GM12878 (cell line): ENCODE measurements at regions of chrX and their contacts with region 1.

Region 1: DNA sequence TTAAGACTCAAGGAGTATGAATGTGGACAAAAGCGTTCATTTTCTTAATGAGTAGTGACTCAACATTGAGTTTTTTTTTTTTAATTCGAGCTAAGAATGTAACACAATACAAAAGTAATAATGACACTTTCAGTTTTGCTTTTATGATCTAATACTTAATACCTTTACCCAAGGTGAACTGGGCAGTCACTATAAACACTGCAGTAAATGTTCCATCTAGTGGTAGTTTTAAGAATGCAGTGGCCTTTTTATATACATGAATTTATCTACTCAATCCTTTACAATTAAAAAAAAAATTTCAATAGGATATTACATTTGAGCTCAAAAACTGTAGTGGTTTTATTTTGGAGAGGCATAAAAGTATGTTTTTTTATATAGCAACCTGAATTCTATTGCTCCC is 33.9 kb downstream of the PDK3 start:
- DNase-seq: no peak
- ATAC-seq: peak; percentile 88
- H3K4me3 ChIP-seq: no peak overlapping the region
- H3K27ac ChIP-seq: no peak overlapping the region
- H3K4me1 ChIP-seq: peaks cover 3% of the 10 kb centered on the region; the same call in 1 of the 2 replicates
- H3K27me3 ChIP-seq: no peaks in the 10 kb centered on the region
- CTCF ChIP-seq: peak; percentile 42 to 55 (median 49); a peak in 5 of 6 replicates
- EP300 ChIP-seq: no peak
- POLR2A ChIP-seq: no peak
- RAD21 ChIP-seq: peak; percentile 60

Region 2: GRCh38 chrX:24259544-24260240 is 239.3 kb before region 1 on chrX:
- CTCF ChIA-PET with region 1: interaction called, 25 read pairs
- POLR2A ChIA-PET with region 1: no interaction called
- RAD21 ChIA-PET with region 1: no interaction called
- SMC1A ChIA-PET with region 1: interaction called, 5 read pairs
- in situ Hi-C with region 1: no loop called
- intact Hi-C with region 1: loop called (anchors 2 kb)
- DNase-seq: no peak
- ATAC-seq: peak; percentile 86
- H3K4me3 ChIP-seq: no peak overlapping the region
- H3K27ac ChIP-seq: no peak overlapping the region
- H3K4me1 ChIP-seq: no peaks in the 10 kb centered on the region; the same call in 1 of the 2 replicates
- H3K27me3 ChIP-seq: no peaks in the 10 kb centered on the region; a peak in 1 of 4 replicates
- CTCF ChIP-seq: peak; percentile 57 to 66 (median 65); a peak in 5 of 6 replicates
- EP300 ChIP-seq: no peak
- POLR2A ChIP-seq: no peak
- RAD21 ChIP-seq: peak; percentile 74

Region 3: GRCh38 chrX:24387724-24388123 is 111.3 kb before region 1 on chrX:
- CTCF ChIA-PET with region 1: interaction called, 15 read pairs
- POLR2A ChIA-PET with region 1: no interaction called
- RAD21 ChIA-PET with region 1: no interaction called
- SMC1A ChIA-PET with region 1: interaction called, 92 read pairs
- in situ Hi-C with region 1: loop called (anchors 5 kb)
- intact Hi-C with region 1: no loop called
- DNase-seq: no peak
- ATAC-seq: no peak
- H3K4me3 ChIP-seq: no peak overlapping the region
- H3K27ac ChIP-seq: no peak overlapping the region
- H3K4me1 ChIP-seq: no peaks in the 10 kb centered on the region
- H3K27me3 ChIP-seq: no peaks in the 10 kb centered on the region; a peak in 1 of 4 replicates
- CTCF ChIP-seq: no peak
- EP300 ChIP-seq: no peak
- POLR2A ChIP-seq: no peak
- RAD21 ChIP-seq: no peak

Region 4: DNA sequence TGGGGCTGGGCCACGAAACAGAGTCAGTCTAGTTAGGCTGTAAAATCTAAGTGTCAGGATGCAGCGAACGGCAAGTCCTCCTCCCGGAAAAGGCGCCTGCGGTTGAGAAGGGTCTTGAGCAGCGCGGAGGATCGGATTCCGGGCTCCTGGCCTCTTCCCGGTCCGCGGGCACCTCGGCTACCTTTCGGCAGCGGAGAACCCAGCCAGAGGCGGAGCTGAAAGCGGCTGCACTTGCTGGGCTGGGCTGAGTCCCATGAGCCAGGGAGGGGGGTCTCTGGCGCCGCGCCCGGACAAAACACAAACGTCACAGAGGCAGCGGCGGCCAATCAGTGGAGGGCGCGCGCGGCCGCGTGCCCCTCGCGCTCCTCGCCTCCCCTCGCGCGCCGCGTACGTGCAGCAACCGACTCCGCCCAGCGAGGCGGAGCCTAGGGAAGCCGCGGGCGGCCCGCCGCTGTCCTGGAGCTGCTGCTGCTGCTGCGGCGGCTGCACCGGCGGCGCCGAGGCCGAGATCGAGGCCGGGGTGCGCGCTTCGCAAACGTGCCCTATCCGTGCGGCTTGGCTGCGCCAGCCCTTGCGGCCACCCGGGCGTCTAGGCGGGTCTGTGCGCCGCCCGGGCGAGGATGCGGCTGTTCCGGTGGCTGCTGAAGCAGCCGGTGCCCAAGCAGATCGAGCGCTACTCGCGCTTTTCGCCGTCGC is 34.0 kb before region 1 on chrX and contains the start of gene PDK3:
- CTCF ChIA-PET with region 1: interaction called, 7 read pairs
- POLR2A ChIA-PET with region 1: interaction called, 4 read pairs
- RAD21 ChIA-PET with region 1: interaction called, 12 read pairs
- SMC1A ChIA-PET with region 1: interaction called, 7 read pairs
- in situ Hi-C with region 1: no loop called
- intact Hi-C with region 1: no loop called
- DNase-seq: peak; percentile 45
- ATAC-seq: peak; percentile 95
- H3K4me3 ChIP-seq: peak within 1 kb of the TSS; percentile 78
- H3K27ac ChIP-seq: peak within 1 kb of the TSS; percentile 73
- H3K4me1 ChIP-seq: peaks cover 6% of the 10 kb centered on the region; the same call in 1 of the 2 replicates
- H3K27me3 ChIP-seq: no peaks in the 10 kb centered on the region
- CTCF ChIP-seq: no peak
- EP300 ChIP-seq: no peak
- POLR2A ChIP-seq: peak; percentile 84
- RAD21 ChIP-seq: no peak
- polyA plus RNA-seq, gene PDK3: 4.2 to 6.4 TPM

Region 5: GRCh38 chrX:24485976-24486680 is 12.8 kb before region 1 on chrX:
- CTCF ChIA-PET with region 1: interaction called, 22 read pairs
- POLR2A ChIA-PET with region 1: interaction called, 3 read pairs
- RAD21 ChIA-PET with region 1: interaction called, 9 read pairs
- SMC1A ChIA-PET with region 1: interaction called, 27 read pairs
- in situ Hi-C with region 1: no loop called
- intact Hi-C with region 1: no loop called
- DNase-seq: no peak
- ATAC-seq: no peak
- H3K4me3 ChIP-seq: no peak overlapping the region
- H3K27ac ChIP-seq: no peak overlapping the region
- H3K4me1 ChIP-seq: no peaks in the 10 kb centered on the region
- H3K27me3 ChIP-seq: no peaks in the 10 kb centered on the region
- CTCF ChIP-seq: no peak
- EP300 ChIP-seq: no peak
- POLR2A ChIP-seq: no peak
- RAD21 ChIP-seq: no peak